ENCODE measurements at regions of chr14 and their contacts with region 1.

Region 1: DNA sequence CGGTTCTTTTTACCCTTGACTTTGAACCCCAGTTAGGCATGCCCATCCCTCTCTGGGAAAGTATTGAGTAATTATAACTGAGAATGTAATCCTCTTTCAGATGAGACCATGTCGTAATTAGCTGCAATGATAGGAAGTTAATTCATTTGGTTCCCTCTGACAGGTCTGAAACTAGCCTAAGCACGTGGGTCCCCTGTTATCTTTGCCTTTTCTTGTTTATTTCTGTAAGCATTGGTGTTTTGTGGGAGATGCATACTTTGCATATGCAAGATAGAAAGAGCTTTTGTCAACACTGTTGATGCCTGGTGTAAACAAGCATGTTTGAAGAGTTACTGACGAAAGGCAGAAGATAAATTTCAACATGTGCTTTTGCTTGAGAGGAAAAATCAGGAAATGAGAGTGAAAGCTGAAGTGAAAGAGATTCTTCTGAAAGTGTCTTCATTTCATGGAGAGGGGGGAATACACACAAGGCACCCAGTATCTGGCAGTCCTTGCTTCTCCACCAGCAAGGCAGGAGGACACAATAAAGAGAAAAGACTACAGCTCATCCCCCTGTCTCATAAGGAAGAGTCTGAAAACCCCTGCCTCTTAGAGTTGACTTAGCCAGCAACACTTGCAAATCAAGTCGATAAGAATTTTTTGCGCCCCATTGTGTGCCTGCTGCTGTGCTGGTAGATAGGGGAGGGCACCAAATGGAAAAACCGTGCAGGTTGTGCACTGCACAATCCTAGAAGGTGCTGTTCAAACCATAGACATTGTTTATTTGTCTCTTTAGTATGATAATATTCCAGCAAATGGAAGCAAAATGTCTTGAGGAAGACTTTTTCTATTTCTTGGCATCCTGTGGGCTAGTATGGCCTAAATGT is 77.8 kb downstream of the SLC24A4 start:
- DNase-seq: peak; percentile 75 to 90 (median 86)
- H3K4me3 ChIP-seq: peak overlapping the region in 1 of 3 experiments; percentile 43
- H3K4me3 Mint-ChIP-seq: peak overlapping the region; percentile 32 to 43
- H3K27ac ChIP-seq: peak overlapping the region; percentile 77 to 85
- H3K27ac Mint-ChIP-seq: peak overlapping the region; percentile 92 to 98 (median 94)
- H3K4me1 ChIP-seq: peaks cover 99% of the 10 kb centered on the region in 2 donors
- H3K4me1 Mint-ChIP-seq: peaks cover 95% of the 10 kb centered on the region
- H3K27me3 ChIP-seq: no peaks in the 10 kb centered on the region
- H3K27me3 Mint-ChIP-seq: peaks cover 0 to 1% (median 0%) of the 10 kb centered on the region in 3 donors
- CTCF ChIP-seq: no peak

Region 2: GRCh38 chr14:92160619-92161018 is 240.2 kb before region 1 on chr14:
- intact Hi-C with region 1: no loop called
- DNase-seq: peak; percentile 70 to 91 (median 85)
- H3K4me3 ChIP-seq: no peak overlapping the region
- H3K4me3 Mint-ChIP-seq: no peak overlapping the region
- H3K27ac ChIP-seq: peak overlapping the region in 1 of 2 donors; percentile 79
- H3K27ac Mint-ChIP-seq: peak overlapping the region; percentile 88 to 96 (median 93)
- H3K4me1 ChIP-seq: peaks cover 13 to 14% of the 10 kb centered on the region in 2 donors
- H3K4me1 Mint-ChIP-seq: peaks cover 11% of the 10 kb centered on the region
- H3K27me3 ChIP-seq: no peaks in the 10 kb centered on the region
- H3K27me3 Mint-ChIP-seq: no peaks in the 10 kb centered on the region
- CTCF ChIP-seq: no peak

Region 3: DNA sequence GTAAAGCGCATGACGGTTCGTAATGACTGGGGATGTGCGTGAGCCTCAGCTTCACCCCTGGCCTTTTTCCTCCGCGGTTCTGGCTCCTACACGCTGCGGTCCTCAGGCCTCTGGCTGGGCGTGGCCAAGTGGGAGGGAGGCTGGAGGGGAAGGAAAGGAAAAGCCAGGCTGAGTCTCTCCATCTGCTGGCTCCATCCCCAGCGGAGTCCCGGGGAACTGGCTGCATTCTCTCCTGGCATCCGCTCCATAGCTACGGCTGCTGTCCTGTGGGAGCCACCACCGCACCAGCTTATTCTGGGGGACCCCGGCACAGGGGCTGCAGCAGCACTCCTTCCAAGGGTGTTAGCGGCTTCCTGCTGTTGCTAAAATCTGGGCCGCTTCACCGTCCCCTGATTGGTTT is 146.0 kb before region 1 on chr14:
- intact Hi-C with region 1: loop called in 1 of 2 experiments (anchors 10 kb)
- DNase-seq: peak in 1 of 3 donors; percentile 32
- H3K4me3 ChIP-seq: peak overlapping the region in 1 of 3 experiments; percentile 44
- H3K4me3 Mint-ChIP-seq: peak overlapping the region; percentile 61 to 73
- H3K27ac ChIP-seq: no peak overlapping the region
- H3K27ac Mint-ChIP-seq: peak overlapping the region in 1 of 7 donors; percentile 63
- H3K4me1 ChIP-seq: peaks cover 34 to 46% of the 10 kb centered on the region in 2 donors
- H3K4me1 Mint-ChIP-seq: peaks cover 46% of the 10 kb centered on the region
- H3K27me3 ChIP-seq: peaks cover 9 to 46% of the 10 kb centered on the region in 2 donors
- H3K27me3 Mint-ChIP-seq: peaks cover 47 to 54% (median 49%) of the 10 kb centered on the region in 3 donors
- CTCF ChIP-seq: no peak

Region 4: GRCh38 chr14:92348148-92348547 is 52.7 kb before region 1 on chr14:
- intact Hi-C with region 1: no loop called
- DNase-seq: peak in 2 of 3 donors; percentile 8 to 14
- H3K4me3 ChIP-seq: no peak overlapping the region
- H3K4me3 Mint-ChIP-seq: no peak overlapping the region
- H3K27ac ChIP-seq: no peak overlapping the region
- H3K27ac Mint-ChIP-seq: peak overlapping the region in 2 of 7 donors; percentile 51 to 53
- H3K4me1 ChIP-seq: peaks cover 3 to 8% of the 10 kb centered on the region in 2 donors
- H3K4me1 Mint-ChIP-seq: peaks cover 43% of the 10 kb centered on the region
- H3K27me3 ChIP-seq: peaks cover 0 to 3% of the 10 kb centered on the region in 2 donors
- H3K27me3 Mint-ChIP-seq: peaks cover 0 to 23% (median 12%) of the 10 kb centered on the region in 3 donors
- CTCF ChIP-seq: no peak

Region 5: GRCh38 chr14:92382677-92383076 is 18.1 kb before region 1 on chr14:
- intact Hi-C with region 1: loop called in 1 of 2 experiments (anchors 2 kb)
- DNase-seq: no peak
- H3K4me3 ChIP-seq: no peak overlapping the region
- H3K4me3 Mint-ChIP-seq: no peak overlapping the region
- H3K27ac ChIP-seq: peak overlapping the region; percentile 9 to 82
- H3K27ac Mint-ChIP-seq: peak overlapping the region; percentile 15 to 92 (median 41)
- H3K4me1 ChIP-seq: peaks cover 54 to 61% of the 10 kb centered on the region in 2 donors
- H3K4me1 Mint-ChIP-seq: peaks cover 60% of the 10 kb centered on the region
- H3K27me3 ChIP-seq: no peaks in the 10 kb centered on the region
- H3K27me3 Mint-ChIP-seq: peaks cover under 1 to 8% (median 3%) of the 10 kb centered on the region in 3 donors
- CTCF ChIP-seq: peak; percentile 68